Posterior vena cava (tissue), 2 donors: ENCODE measurements at regions of chr11 and their contacts with region 1.

Region 1: DNA sequence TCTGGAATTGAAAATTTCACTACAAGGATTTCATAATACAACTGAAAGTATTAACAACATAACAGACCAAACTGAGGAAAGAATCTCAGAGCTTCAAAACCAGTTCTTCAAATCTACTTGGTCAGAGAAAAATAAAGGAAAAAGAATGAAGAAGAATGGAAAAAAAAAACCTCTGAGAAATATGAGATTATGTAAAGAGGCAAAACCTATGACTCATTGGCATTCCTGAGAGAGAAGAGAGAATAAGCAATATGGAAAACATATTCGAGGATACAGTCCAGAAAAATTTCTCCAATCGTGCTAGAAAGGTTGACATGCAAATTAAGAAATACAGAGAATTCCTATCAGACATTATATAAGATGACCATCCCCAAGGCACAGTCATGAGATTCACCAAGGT is 23.4 kb upstream of the GPR83 start:
- DNase-seq: no peak

Region 2: DNA sequence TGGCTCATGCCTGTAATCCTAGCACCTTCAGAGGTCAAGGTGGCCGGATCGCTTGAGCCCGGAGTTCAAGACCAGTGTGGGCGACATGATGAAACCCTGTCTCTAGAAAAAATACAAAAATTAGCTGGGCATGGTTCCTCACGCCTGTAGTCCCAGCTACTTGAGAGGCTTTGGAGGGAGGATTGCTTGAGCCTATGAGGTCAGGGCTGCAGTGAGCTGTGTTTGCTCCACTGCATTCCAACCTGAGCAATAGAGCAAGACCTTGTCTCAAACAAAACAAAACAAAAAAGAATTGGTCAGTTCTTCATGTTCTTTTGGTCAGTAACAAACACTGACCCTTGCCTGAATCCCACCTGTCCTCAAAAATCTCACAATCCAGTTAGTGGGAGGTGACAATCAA is 537.6 kb before region 1 on chr11:
- intact Hi-C with region 1: loop called in 1 of 2 experiments (anchors 10 kb)
- DNase-seq: no peak